OCI-LY7 (cell line): ENCODE measurements at regions of chr20 and their contacts with region 1.

Region 1: GRCh38 chr20:62500237-62500864 is 24.6 kb upstream of the GATA5 start:
- DNase-seq: peak; percentile 73
- H3K4me3 ChIP-seq: no peak overlapping the region
- H3K27ac ChIP-seq: no peak overlapping the region
- H3K4me1 ChIP-seq: peaks cover 18% of the 10 kb centered on the region
- CTCF ChIP-seq: peak; percentile 86

Region 2: GRCh38 chr20:62401331-62401779 is 99.0 kb before region 1 on chr20:
- CTCF ChIA-PET with region 1: interaction called, 14 read pairs
- POLR2A ChIA-PET with region 1: no interaction called
- intact Hi-C with region 1: no loop called
- DNase-seq: no peak
- H3K4me3 ChIP-seq: no peak overlapping the region
- H3K27ac ChIP-seq: no peak overlapping the region
- H3K4me1 ChIP-seq: peaks cover 9% of the 10 kb centered on the region
- CTCF ChIP-seq: no peak

Region 3: GRCh38 chr20:62616728-62617621 is 116.6 kb after region 1 on chr20:
- CTCF ChIA-PET with region 1: interaction called, 10 read pairs
- POLR2A ChIA-PET with region 1: no interaction called
- intact Hi-C with region 1: loop called (anchors 1 kb)
- DNase-seq: peak; percentile 82
- H3K4me3 ChIP-seq: no peak overlapping the region
- H3K27ac ChIP-seq: no peak overlapping the region
- H3K4me1 ChIP-seq: peaks cover 31% of the 10 kb centered on the region
- CTCF ChIP-seq: peak; percentile 98